ENCODE measurements at regions of chr13 and their contacts with region 1.

Region 1: GRCh38 chr13:98445340-98446233 is 131.3 kb downstream of the STK24 start:
- DNase-seq: peak; percentile 76 to 82
- H3K4me3 ChIP-seq: no peak overlapping the region
- H3K27ac ChIP-seq: peak overlapping the region; percentile 61 to 62
- H3K4me1 ChIP-seq: peaks cover 4 to 8% of the 10 kb centered on the region in 2 donors
- H3K27me3 ChIP-seq: no peaks in the 10 kb centered on the region
- CTCF ChIP-seq: peak; percentile 95 to 98 (median 97)
- POLR2A ChIP-seq: no peak

Region 2: DNA sequence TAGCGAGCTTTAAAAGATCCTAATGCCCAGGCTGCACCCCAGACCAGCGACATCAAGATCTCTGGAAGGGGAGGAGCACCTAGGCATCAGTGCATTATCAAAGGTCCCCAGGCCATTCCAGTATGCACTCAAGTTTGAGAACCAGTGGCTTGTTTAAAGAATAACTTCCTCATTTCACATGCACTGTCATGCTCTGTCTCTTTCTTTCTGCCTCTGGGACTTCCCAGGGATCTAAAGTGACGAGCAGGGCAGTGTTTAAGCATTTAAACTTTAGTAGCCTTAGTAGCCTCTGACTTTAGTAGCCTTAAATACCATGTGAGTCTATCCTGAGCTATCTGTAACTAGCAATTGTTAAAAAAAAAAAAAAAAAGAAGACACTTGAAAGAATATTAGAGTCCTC is 311.6 kb before region 1 on chr13:
- intact Hi-C with region 1: no loop called
- DNase-seq: no peak
- H3K4me3 ChIP-seq: no peak overlapping the region
- H3K27ac ChIP-seq: no peak overlapping the region
- H3K4me1 ChIP-seq: no peaks in the 10 kb centered on the region
- H3K27me3 ChIP-seq: no peaks in the 10 kb centered on the region
- CTCF ChIP-seq: no peak
- POLR2A ChIP-seq: no peak

Region 3: GRCh38 chr13:98570929-98571372 is 125.4 kb after region 1 on chr13:
- intact Hi-C with region 1: loop called (anchors 5 kb)
- DNase-seq: peak; percentile 34 to 35
- H3K4me3 ChIP-seq: peak overlapping the region in 1 of 2 donors; percentile 7
- H3K27ac ChIP-seq: peak overlapping the region; percentile 35 to 79
- H3K4me1 ChIP-seq: peaks cover 4% of the 10 kb centered on the region in 2 donors
- H3K27me3 ChIP-seq: no peaks in the 10 kb centered on the region
- CTCF ChIP-seq: no peak
- POLR2A ChIP-seq: no peak

Region 4: GRCh38 chr13:98653463-98653985 is 207.9 kb after region 1 on chr13:
- intact Hi-C with region 1: loop called (anchors 5 kb)
- DNase-seq: peak; percentile 74 to 77
- H3K4me3 ChIP-seq: no peak overlapping the region
- H3K27ac ChIP-seq: no peak overlapping the region
- H3K4me1 ChIP-seq: no peaks in the 10 kb centered on the region
- H3K27me3 ChIP-seq: no peaks in the 10 kb centered on the region
- CTCF ChIP-seq: peak; percentile 87 to 92 (median 89)
- POLR2A ChIP-seq: no peak